Activated B cell treated with CpG ODN at 0.5 μM for 24 hours (primary cell): ENCODE measurements at regions of chr18 and their contacts with region 1.

Region 1: DNA sequence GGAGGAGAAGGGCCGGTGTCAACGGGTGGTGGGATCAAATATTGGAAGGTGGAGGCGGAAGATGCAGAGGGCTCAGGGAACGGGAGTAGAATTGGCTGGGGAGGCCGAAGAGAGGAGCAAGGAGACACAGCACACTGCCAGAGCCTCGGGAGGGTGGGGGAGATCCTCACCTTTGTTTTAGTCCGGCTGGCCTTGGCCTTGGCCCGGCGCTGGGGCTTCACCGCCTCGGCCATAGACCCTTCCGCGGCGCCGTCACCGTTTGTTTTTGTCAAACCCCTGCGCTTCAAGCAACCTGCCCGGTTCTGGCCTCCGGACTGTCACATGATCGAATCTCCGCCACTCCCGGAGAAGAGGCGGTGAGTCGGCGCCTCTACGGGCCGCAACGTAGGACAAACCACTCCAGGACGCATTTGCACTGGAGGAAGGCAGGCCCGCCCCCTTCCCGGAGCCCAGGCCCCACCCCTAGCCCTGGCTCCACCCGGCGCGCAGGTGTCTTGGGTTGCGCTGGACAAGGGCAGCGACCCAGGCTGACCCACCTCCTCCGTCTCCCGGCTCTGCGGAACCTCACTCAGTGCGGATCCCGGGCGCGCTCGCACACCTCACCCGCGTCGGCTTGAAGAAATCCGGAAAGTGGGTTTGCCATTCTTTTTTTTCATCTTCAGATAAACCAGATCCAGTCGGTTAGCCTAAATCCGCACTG is at the start of gene EPG5:
- DNase-seq: peak; percentile 88
- ATAC-seq: peak; percentile 100
- H3K4me3 Mint-ChIP-seq: peak within 1 kb of the TSS; percentile 98
- H3K27ac Mint-ChIP-seq: peak within 1 kb of the TSS; percentile 87
- H3K4me1 Mint-ChIP-seq: peaks cover 42% of the 10 kb centered on the region
- H3K27me3 Mint-ChIP-seq: no peaks in the 10 kb centered on the region
- CTCF ChIP-seq: no peak
- total RNA-seq, gene EPG5: 34.2 and 38.3 TPM in 2 replicates

Region 2: GRCh38 chr18:45874491-45875184 is 92.5 kb before region 1 on chr18:
- CTCF ChIA-PET with region 1: no interaction called
- POLR2A ChIA-PET with region 1: no interaction called
- intact Hi-C with region 1: loop called (anchors 2 kb)
- DNase-seq: peak; percentile 22
- ATAC-seq: peak; percentile 93
- H3K4me3 Mint-ChIP-seq: peak overlapping the region; percentile 49
- H3K27ac Mint-ChIP-seq: peak overlapping the region; percentile 94
- H3K4me1 Mint-ChIP-seq: peaks cover 18% of the 10 kb centered on the region
- H3K27me3 Mint-ChIP-seq: no peaks in the 10 kb centered on the region
- CTCF ChIP-seq: no peak

Region 3: DNA sequence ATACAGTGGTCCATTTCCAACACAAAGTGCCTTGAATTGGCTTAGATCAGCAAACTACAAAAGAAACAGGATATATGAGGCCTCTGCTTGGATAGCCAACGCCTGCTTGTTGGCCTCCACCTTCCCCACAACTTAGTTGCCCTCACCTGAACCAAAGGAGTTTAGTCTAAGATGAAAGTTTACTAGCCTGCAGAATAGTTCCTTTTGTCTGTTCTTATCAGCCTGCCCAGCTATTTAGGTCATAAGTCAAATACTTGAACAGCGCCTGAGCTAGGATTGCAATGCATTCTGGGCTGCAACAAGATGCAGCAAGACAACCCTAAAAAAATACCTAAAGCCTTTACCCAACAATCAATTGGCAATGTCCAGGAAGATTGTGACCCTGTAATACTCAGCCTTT is 13.1 kb after region 1 on chr18:
- CTCF ChIA-PET with region 1: no interaction called
- POLR2A ChIA-PET with region 1: no interaction called
- intact Hi-C with region 1: no loop called
- DNase-seq: no peak
- ATAC-seq: no peak
- H3K4me3 Mint-ChIP-seq: no peak overlapping the region
- H3K27ac Mint-ChIP-seq: no peak overlapping the region
- H3K4me1 Mint-ChIP-seq: no peaks in the 10 kb centered on the region
- H3K27me3 Mint-ChIP-seq: no peaks in the 10 kb centered on the region
- CTCF ChIP-seq: no peak

Region 4: DNA sequence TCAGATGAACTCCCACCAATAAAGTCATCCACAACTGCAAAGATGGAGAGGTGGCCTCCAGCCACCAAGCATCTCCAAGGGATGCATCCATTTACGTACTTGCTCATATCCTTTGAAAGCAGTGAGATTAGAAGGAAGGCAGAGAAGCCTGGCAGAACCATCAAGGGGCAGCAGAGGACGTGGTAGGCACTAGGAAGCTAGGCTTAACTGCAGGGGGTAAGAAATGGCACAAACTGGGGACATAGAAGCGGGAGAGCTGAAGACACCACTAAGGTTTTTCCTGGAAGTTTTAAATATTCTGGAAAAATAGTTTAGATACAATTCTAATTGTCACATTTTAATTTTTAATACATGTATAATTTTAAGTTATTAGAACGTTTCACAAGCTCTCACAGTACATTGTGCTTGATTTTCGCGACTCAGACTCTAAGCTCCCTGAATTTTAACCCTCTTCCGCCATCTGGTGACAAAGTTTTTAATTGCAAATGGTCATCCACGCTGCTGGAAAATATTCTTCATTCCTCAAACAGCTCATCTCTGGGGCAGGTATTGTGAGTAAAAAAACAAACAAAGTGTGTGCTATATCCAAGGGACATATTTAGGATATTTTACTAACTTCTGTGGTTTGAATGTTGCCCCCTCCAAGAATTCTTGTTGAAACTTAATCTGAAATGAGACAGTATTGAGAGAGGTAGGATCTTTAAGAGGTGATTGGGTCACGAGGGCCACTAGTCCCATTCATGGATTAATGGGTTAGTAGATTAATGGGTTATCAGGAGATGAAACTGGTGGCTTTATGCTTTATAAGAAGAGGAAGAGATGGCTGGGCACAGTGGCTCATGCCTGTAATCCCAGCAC is 106.5 kb after region 1 on chr18:
- CTCF ChIA-PET with region 1: interaction called, 4 read pairs
- POLR2A ChIA-PET with region 1: no interaction called
- intact Hi-C with region 1: loop called (anchors 1 kb)
- DNase-seq: no peak
- ATAC-seq: peak; percentile 53
- H3K4me3 Mint-ChIP-seq: no peak overlapping the region
- H3K27ac Mint-ChIP-seq: no peak overlapping the region
- H3K4me1 Mint-ChIP-seq: peaks cover 17% of the 10 kb centered on the region
- H3K27me3 Mint-ChIP-seq: peaks cover 10% of the 10 kb centered on the region
- CTCF ChIP-seq: no peak

Region 5: DNA sequence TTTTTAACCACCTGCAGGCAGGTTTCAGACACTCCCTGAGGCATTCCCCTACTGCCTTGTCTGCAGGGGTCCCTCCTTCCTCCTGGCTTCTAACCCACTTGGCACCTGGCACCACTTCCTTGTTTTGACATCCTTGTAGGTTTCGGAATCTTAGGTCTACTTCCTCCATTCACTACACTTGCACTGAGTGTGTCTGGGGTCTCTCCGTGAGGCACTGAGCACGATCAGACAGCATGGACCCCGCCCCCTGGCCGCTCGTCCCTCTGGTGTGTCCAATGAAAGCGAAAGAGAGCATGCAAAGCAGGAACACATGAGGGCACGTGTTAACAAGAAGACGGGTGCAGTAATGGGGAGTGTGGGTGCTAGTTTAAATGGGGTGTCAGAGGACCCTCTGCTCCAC is 200.8 kb after region 1 on chr18:
- CTCF ChIA-PET with region 1: no interaction called
- POLR2A ChIA-PET with region 1: no interaction called
- intact Hi-C with region 1: loop called (anchors 1 kb)
- DNase-seq: peak; percentile 69
- ATAC-seq: peak; percentile 97
- H3K4me3 Mint-ChIP-seq: peak overlapping the region; percentile 76
- H3K27ac Mint-ChIP-seq: peak overlapping the region; percentile 91
- H3K4me1 Mint-ChIP-seq: peaks cover 28% of the 10 kb centered on the region
- H3K27me3 Mint-ChIP-seq: no peaks in the 10 kb centered on the region
- CTCF ChIP-seq: no peak

Region 6: GRCh38 chr18:46917108-46917802 is 950.1 kb after region 1 on chr18 and contains the starts of genes KATNAL2 and PIAS2:
- CTCF ChIA-PET with region 1: no interaction called
- POLR2A ChIA-PET with region 1: no interaction called
- intact Hi-C with region 1: loop called (anchors 10 kb)
- DNase-seq: peak; percentile 85
- ATAC-seq: peak; percentile 93
- H3K4me3 Mint-ChIP-seq: peak within 1 kb of the TSS; percentile 87
- H3K27ac Mint-ChIP-seq: peak within 1 kb of the TSS; percentile 79
- H3K4me1 Mint-ChIP-seq: peaks cover 30% of the 10 kb centered on the region
- H3K27me3 Mint-ChIP-seq: no peaks in the 10 kb centered on the region
- CTCF ChIP-seq: no peak
- total RNA-seq, gene KATNAL2: 1.2 and 2.6 TPM in 2 replicates
- total RNA-seq, gene PIAS2: 34.2 and 36.0 TPM in 2 replicates